Left cardiac atrium (tissue), 4 donors: ENCODE measurements at regions of chr9 and their contacts with region 1.

Region 1: DNA sequence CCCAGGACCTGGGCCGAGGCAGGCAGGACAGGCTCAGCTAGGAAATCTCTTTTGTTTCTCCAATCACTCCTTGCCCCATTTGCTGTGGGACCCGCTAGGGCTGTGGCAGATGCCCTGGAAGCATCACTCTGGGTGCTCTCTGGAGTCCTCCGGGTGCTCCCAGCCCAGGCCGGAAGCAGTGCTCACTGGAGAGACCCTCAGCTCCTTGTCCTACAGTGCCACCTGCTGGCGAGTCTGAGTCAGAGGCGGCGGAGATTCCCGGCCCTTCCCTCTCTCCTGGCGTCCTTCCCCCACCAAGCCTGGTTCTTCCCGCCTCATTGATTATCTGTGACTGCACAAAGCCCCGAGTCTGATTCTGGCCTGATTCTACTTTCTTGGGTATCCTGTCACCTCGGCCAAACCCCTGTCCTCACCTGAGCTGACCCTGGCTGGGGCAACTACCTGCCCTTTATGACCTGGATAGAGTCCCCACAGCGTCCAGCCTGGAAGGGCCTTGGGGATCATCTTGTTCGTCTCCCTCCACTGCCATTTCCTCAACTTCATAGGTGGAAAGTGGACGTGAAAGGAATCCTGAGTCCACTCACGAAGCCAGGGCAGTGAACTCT is 7.3 kb upstream of the BARHL1 start:
- DNase-seq: peak; percentile 71
- ATAC-seq: peak; percentile 79 to 86

Region 2: DNA sequence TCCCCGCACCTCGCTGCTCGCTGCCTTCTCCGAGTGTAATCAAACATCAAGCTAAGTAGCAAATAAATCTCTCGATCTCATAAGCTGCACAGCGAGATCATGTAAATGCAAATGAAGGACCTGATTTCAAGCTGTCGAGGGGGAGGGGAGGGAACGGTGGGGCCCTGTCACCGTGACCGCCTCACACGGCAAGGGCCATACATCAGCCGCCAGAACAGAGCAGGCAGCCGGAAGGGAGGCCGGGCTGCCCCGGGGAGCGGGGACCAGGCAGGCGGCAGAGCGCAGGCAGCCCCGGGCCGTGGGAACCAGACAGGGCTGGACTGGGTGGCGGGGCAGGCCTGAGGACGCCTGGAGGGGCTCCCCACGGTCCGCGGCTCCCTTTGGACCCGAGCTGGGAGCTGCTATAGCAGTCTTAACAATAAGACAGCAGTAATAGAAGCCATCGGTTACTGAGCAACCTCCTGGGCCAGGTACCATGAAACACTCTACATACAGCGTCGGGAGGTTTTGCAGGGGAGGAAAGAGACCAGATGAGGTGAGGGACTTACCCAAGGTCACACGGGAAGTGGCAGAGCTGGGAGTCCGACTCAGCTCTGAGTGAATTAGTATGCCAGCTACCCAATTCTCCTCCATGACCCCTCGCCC is 88.3 kb before region 1 on chr9:
- intact Hi-C with region 1: no loop called
- DNase-seq: no peak
- ATAC-seq: peak in 1 of 2 donors; percentile 38

Region 3: GRCh38 chr9:132507746-132508469 is 67.2 kb before region 1 on chr9:
- intact Hi-C with region 1: loop called (anchors 1 to 5 kb)
- DNase-seq: peak; percentile 61
- ATAC-seq: peak; percentile 69 to 76